ENCODE measurements at regions of chr6 and their contacts with region 1.

Region 1: DNA sequence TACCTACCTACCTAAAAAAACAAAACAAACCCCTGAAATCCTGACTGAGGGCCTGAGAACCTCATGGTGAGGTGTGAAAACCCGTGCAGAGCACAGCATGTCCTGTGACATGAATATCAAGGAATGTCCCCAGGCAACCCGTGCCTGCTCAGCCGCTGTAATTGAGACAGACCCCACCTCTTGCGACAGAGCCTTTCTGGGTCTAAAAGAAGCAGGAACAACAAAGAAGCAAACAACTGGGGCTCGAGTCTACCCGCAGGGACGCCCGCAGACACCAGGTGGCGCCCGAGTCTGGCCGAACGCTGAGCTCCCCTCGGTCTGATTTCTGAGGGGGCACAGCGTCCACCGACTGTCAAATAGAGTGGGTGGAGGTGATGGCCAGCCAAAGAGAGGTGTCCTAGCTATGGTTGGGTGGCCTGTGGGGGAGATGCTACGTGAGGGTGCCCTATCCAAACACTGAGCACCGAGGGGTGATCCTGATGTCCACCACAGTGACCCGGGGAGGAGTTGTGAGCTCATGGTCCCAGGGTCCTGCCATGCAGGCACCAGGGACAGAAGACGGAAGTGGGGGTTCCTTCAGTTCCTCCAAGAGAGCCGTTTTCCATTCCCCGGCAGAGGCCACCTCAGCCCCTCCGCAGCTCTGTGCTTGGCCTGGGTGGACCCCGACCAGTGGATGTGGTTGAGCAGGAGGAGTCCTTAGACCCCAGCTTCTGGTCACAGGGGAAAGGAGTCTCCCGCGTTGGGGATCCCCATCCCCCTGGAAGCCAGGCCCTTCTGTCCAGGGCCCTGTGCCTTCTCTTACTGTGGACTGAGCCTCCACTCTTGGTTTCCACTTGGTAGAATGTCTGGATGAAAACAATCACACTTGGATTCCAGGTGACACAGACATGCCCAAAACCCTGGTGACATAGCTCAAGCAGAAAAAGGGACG is 268.2 kb downstream of the CDC5L start:
- DNase-seq: peak; percentile 72 to 79
- H3K4me3 ChIP-seq: no peak overlapping the region
- H3K27ac ChIP-seq: no peak overlapping the region
- H3K4me1 ChIP-seq: peaks cover 0 to 8% of the 10 kb centered on the region in 2 donors
- H3K27me3 ChIP-seq: no peaks in the 10 kb centered on the region
- CTCF ChIP-seq: peak; percentile 81 to 95 (median 90)
- POLR2A ChIP-seq: no peak

Region 2: GRCh38 chr6:44475779-44476434 is 179.8 kb before region 1 on chr6:
- intact Hi-C with region 1: loop called (anchors 10 kb)
- DNase-seq: peak; percentile 83 to 89
- H3K4me3 ChIP-seq: no peak overlapping the region
- H3K27ac ChIP-seq: peak overlapping the region; percentile 52 to 96 (median 84)
- H3K4me1 ChIP-seq: peaks cover 18 to 34% of the 10 kb centered on the region in 2 donors
- H3K27me3 ChIP-seq: no peaks in the 10 kb centered on the region
- CTCF ChIP-seq: peak; percentile 65 to 99 (median 94)
- POLR2A ChIP-seq: peak in 1 of 2 donors; percentile 21

Region 3: DNA sequence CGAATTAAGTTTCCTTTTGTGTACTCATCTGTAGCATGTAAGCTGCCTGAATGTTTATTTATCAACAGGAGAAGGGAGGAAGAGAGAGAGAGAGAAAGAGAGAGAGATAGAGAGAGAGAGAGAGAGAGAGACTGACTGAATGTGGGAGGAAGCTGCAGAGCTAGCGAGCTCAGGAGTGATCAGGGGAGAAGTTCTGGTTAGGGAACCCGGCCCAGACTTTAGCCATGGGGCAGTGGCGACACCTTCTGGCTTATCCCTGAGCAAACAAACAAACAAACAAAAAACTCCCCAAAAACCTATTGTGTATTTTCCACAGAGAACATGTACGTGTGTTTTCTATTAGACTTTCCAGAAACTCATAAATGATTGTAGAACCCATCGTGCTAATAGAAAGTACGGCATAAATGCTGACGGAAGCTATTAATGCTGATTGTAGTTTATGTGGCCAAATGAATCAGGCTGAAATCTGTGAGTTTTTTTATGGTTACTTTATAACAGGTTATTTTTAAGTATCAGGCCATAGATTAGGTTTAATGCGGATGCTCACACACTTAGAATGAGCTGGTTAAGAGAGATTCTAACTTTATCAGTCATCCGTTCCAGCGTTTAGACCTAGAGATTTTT is 1267.2 kb after region 1 on chr6:
- intact Hi-C with region 1: loop called (anchors 10 kb)
- DNase-seq: peak; percentile 64 to 67
- H3K4me3 ChIP-seq: no peak overlapping the region
- H3K27ac ChIP-seq: peak overlapping the region in 1 of 3 donors; percentile 7
- H3K4me1 ChIP-seq: peaks cover 0 to 7% of the 10 kb centered on the region in 2 donors
- H3K27me3 ChIP-seq: no peaks in the 10 kb centered on the region
- CTCF ChIP-seq: peak in 5 of 6 experiments; percentile 29 to 70 (median 66)
- POLR2A ChIP-seq: no peak